Vagina (tissue), 2 donors: ENCODE measurements at regions of chr16 and their contacts with region 1.

Region 1: DNA sequence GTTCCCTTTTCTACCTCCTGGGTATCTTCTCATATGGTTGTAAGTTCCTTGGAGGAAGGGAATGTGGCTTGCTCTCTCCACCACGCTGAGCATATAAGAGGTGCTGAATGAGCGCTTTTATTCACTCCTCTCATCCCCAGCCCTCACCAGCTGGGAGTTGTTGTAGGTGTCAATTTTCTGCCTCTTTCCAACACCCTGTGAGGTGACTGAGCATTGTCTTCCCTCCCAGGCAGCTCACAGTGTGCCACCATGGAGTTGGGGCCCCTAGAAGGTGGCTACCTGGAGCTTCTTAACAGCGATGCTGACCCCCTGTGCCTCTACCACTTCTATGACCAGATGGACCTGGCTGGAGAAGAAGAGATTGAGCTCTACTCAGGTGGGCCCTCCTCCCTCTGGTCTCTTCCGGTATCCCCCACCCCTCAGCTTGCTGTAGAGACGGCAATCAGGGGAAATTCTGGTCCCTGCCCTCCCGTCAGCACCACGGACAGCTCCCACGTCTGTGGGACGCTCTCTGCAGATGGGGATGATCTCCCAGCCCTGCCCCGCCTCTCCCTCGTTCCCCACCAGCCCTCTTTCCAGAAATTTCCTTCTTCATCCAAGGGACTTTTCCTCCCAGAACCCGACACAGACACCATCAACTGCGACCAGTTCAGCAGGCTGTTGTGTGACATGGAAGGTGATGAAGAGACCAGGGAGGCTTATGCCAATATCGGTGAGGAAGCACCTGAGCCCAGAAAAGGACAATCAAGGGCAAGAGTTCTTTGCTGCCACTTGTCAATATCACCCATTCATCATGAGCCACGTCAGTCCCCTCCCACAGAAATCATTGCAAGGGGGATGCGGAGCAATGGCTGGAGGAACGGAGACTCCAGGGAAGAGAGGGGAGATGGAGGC is 18.3 kb downstream of the CIITA start:
- DNase-seq: no peak
- H3K4me3 ChIP-seq: no peak overlapping the region
- H3K27ac ChIP-seq: no peak overlapping the region
- H3K4me1 ChIP-seq: no peaks in the 10 kb centered on the region
- H3K27me3 ChIP-seq: no peaks in the 10 kb centered on the region
- CTCF ChIP-seq: no peak
- POLR2A ChIP-seq: no peak

Region 2: DNA sequence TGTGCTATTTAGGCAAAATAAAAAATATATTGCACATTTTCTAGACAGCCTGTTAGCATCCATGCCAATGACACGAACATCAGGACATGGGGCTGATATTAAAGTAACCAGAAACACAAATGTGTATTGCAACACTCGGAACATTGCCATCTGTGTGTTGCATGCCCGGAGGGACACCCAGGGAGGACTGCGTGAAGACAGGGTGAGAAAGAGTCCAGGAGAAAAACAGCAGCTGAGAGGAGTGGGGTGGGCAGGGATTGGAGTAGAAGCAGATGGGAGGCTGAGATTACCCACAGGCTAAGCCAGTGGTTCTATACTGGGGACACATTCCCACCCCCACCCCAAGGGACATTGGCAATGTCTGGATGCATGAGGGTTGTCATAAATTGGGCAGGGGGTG is 827.9 kb before region 1 on chr16:
- intact Hi-C with region 1: no loop called
- DNase-seq: no peak
- H3K4me3 ChIP-seq: no peak overlapping the region
- H3K27ac ChIP-seq: no peak overlapping the region
- H3K4me1 ChIP-seq: no peaks in the 10 kb centered on the region
- H3K27me3 ChIP-seq: no peaks in the 10 kb centered on the region
- CTCF ChIP-seq: no peak
- POLR2A ChIP-seq: no peak

Region 3: GRCh38 chr16:10835281-10835931 is 59.9 kb before region 1 on chr16:
- intact Hi-C with region 1: loop called (anchors 10 kb)
- DNase-seq: no peak
- H3K4me3 ChIP-seq: no peak overlapping the region
- H3K27ac ChIP-seq: no peak overlapping the region
- H3K4me1 ChIP-seq: no peaks in the 10 kb centered on the region
- H3K27me3 ChIP-seq: no peaks in the 10 kb centered on the region
- CTCF ChIP-seq: no peak
- POLR2A ChIP-seq: no peak

Region 4: DNA sequence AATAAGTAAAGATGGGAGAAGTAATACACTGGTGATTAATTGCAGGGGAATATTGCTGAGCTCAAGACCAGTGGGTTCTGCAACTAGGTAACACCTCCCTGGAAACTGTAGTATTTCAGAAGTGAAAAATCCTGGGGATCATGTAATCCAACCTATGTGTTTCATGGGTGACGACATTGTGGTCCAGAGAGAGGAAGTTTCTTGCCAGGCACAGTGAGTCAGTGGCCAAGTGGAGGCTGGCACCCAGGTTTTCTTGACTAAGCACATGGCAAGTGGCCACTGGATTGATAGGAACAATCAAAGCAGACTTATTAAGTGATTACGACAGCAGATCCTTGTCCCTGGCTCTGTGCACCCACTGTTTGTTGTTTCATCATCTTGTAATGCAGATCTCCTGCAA is 32.9 kb before region 1 on chr16:
- intact Hi-C with region 1: no loop called
- DNase-seq: no peak
- H3K4me3 ChIP-seq: no peak overlapping the region
- H3K27ac ChIP-seq: no peak overlapping the region
- H3K4me1 ChIP-seq: no peaks in the 10 kb centered on the region
- H3K27me3 ChIP-seq: no peaks in the 10 kb centered on the region
- CTCF ChIP-seq: no peak
- POLR2A ChIP-seq: no peak

Region 5: GRCh38 chr16:11004957-11005610 is 109.8 kb after region 1 on chr16:
- intact Hi-C with region 1: no loop called
- DNase-seq: no peak
- H3K4me3 ChIP-seq: no peak overlapping the region
- H3K27ac ChIP-seq: no peak overlapping the region
- H3K4me1 ChIP-seq: peaks cover 11% of the 10 kb centered on the region
- H3K27me3 ChIP-seq: no peaks in the 10 kb centered on the region
- CTCF ChIP-seq: no peak
- POLR2A ChIP-seq: no peak